ENCODE measurements at regions of chr15 and their contacts with region 1.

Region 1: GRCh38 chr15:95259513-95259912 is 1028.2 kb downstream of the MCTP2 start:
- DNase-seq: no peak
- ATAC-seq: no peak

Region 2: DNA sequence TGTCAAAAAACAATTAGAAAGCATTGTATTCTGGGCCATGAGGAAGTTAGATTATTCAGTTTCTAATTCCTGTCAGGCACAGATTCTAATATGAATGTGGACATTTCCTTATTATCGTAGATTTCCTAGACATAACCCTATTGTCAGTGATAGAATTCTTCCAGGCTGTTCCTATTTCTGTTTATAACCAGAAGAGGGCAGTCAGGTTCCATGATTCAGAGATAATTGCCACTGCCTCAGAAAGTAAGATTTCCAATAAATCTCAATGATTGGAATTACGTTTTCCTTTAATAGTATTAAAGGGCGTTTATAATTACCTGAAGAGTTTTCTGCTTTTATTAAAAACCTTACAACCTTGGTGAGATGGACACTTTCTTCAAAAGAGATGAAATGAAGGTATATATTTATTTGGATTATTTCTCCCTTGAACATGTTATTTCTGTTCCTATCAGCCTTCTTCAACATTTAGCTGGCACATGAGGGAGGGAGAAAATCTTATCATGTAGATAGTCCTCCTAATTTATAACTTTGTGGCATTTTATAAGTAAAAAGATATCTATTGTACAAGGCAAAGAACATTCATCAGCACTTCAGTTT is 589.0 kb before region 1 on chr15:
- intact Hi-C with region 1: loop called (anchors 5 kb)
- DNase-seq: no peak
- ATAC-seq: no peak

Region 3: DNA sequence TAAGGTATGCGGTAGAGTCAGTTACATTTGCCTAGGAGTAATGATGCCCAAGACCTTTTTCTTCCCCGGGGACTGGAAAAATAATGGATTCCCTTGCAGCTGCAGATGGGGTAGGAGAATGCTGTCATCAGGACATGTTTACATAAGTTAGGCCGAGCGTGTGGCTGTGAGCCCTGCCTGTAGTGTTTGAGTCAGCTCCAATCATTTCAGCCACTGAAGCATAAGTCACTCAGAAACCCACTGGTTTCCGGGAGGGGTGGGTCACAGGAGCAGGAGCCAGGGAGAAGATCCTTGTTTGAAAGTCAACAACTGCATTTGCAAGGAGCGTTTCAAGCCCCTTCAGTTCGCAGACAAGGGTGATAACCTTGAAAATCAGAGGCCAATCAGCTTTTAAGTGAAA is 465.9 kb before region 1 on chr15:
- intact Hi-C with region 1: no loop called
- DNase-seq: no peak
- ATAC-seq: no peak

Region 4: DNA sequence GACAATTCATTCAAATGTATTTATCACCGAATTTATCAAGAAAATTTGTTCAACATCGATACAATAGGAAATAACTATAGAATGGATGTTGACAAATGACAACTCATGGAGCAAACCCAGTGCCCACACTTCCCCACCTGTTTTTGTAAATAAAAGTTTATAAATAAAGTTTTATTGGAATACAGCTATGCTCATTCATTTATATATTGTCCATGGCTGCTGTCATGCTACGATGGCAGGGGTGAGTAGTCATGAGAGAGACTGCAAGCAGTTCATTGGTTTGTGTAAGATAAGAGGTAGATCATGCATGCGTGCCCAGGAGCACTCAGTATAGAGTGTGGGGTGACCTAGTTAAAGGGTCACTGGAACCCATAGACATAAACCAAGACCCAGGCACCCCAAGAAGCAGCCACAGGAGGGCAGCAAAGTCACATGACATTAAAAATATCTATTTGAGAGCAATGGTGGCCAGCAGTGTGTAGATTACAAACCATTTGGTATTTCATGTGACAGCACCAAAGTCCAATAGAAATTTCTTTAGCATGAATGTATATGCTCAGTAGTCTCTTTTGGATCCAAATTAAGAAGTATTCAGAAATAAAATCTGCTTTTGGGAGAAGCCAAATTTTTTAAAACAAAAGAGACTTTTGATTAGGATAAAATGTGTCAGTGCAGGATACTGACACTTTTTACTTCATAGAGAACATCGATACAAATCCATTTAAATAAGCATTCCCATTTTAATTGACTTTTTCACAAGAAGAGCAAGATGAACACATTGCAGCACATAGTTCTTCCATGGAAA is 233.4 kb before region 1 on chr15:
- intact Hi-C with region 1: loop called (anchors 10 kb)
- DNase-seq: no peak
- ATAC-seq: no peak

Region 5: DNA sequence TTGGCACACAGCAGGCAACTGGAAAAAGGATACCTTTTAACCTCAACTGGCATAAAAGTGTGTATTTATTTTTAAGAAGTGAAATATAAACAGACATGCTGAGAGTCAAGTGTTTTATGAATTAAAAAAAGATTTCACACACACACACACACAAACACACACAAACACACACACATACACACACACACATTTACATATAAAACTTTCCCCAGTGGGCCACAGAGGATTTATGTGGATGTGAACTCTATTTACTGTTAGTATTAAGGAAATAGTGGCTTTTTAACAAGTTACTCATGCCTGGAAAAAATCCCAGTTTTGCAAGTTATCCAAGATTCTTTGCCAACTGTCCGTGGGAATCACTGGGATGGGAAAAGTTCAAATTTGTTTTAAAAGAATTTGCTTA is 345.1 kb after region 1 on chr15:
- intact Hi-C with region 1: loop called (anchors 10 kb)
- DNase-seq: no peak
- ATAC-seq: peak; percentile 26

Region 6: DNA sequence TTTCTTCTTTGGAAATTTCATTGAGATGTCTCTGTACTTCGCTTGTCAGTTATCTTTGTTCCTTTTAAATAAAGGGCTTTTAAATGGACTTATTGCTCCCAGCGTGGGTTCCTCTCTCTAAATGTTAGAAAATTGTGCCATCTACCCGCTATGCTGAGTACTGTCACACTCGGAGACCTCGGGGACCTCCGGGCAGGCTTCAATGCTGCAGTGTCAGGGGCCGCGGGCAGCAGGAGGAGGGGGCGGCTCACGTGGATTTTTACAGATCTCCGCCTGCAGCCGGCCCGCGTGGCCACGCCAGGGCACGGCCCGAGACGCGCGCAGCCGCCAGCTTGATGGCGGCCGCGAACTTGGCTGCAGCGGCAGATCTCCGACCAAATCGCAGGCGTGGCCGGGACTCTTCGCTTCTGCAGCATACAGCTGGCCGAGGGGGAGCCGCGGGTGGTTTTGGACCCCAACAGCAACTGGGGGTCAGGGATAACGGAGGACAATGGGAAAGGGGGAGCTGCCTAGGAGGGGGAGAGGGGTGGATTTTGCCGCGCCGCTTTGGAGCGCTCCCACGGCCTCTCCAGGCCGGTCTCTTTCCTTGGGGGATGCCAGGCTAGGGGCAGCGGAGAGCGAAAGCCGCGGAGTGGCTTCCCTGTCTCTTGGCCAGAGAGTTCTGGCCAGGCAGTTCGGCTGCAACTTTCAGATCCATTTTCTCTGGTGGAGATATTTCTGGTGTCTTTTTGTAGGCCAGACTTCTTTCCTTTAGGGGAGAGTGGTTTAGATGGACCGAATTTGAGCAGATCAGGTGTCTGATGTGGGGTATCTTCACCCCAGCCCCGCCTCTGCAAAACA is 1086.3 kb after region 1 on chr15:
- intact Hi-C with region 1: loop called (anchors 1 kb)
- DNase-seq: peak; percentile 90
- ATAC-seq: peak; percentile 84

Measured in Right ventricle myocardium inferior (tissue), 1 donor.